Right cardiac atrium (tissue), 5 donors: ENCODE measurements at regions of chr7 and their contacts with region 1.

Region 1: GRCh38 chr7:49530481-49530880 is 243.0 kb upstream of the VWC2 start:
- DNase-seq: no peak
- ATAC-seq: no peak
- H3K4me3 ChIP-seq: no peak overlapping the region
- H3K27ac ChIP-seq: no peak overlapping the region
- H3K4me1 ChIP-seq: no peaks in the 10 kb centered on the region
- H3K27me3 ChIP-seq: no peaks in the 10 kb centered on the region

Region 2: GRCh38 chr7:48899932-48900331 is 630.5 kb before region 1 on chr7:
- intact Hi-C with region 1: loop called in 1 of 4 experiments (anchors 5 kb)
- DNase-seq: no peak
- ATAC-seq: no peak
- H3K4me3 ChIP-seq: no peak overlapping the region
- H3K27ac ChIP-seq: no peak overlapping the region
- H3K4me1 ChIP-seq: no peaks in the 10 kb centered on the region
- H3K27me3 ChIP-seq: no peaks in the 10 kb centered on the region